ENCODE measurements at regions of chr13 and their contacts with region 1.

Region 1: DNA sequence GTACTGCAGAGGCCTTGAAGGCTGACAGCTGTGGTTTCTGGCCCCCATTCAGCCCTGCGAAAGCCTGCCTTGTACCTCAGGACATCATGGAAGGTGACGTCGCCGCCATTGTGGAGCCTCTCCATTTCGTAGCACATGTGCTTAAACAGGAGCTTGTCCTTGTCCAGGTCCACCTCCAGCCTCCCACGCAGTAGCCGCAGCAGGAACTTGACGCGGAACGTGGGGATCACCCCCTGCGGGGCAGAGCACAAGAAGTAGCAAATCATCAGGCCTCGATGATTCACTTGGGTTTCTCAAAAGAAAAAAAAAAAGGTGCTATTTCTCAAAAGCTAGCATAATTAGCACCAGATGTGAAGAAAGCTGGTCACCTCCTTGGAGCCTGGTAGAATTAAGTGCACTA is 351.0 kb downstream of the NALCN start:
- DNase-seq: no peak
- H3K4me3 Mint-ChIP-seq: no peak overlapping the region
- H3K27ac Mint-ChIP-seq: no peak overlapping the region
- H3K4me1 Mint-ChIP-seq: no peaks in the 10 kb centered on the region
- H3K27me3 Mint-ChIP-seq: no peaks in the 10 kb centered on the region

Region 2: DNA sequence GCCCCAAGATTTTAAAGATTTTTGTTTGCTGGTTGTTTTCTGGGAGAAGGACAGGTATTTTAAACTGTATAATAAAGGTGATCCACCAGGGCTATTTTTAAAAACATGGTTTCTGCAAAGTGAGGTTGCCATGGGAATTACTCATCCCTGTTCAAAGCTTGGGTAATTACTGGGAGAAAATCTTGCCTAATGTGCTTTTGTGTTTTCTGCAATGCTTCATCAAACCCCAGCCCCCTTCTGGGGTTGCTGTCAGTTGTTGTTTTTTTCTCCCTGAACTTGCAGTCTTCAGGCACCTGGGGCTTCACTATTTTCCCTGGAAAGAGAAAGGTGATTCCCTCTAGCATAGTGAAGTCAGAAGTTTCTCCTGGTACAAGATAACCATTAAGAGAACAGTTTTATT is 73.8 kb after region 1 on chr13:
- intact Hi-C with region 1: loop called (anchors 10 kb)
- DNase-seq: no peak
- H3K4me3 Mint-ChIP-seq: no peak overlapping the region
- H3K27ac Mint-ChIP-seq: no peak overlapping the region
- H3K4me1 Mint-ChIP-seq: no peaks in the 10 kb centered on the region
- H3K27me3 Mint-ChIP-seq: no peaks in the 10 kb centered on the region

Region 3: GRCh38 chr13:101706651-101707050 is 641.3 kb after region 1 on chr13:
- intact Hi-C with region 1: no loop called
- DNase-seq: no peak
- H3K4me3 Mint-ChIP-seq: no peak overlapping the region
- H3K27ac Mint-ChIP-seq: no peak overlapping the region
- H3K4me1 Mint-ChIP-seq: peaks cover 4% of the 10 kb centered on the region
- H3K27me3 Mint-ChIP-seq: no peaks in the 10 kb centered on the region

Measured in activated T-helper 2 cell treated with anti-CD3 and anti-CD28 coated beads, Interferon-gamma antibody, Interleukin-2, Interleukin-4, amounts not matched to agents 10 μg/mL and 5 μg/mL and 100 μg/mL, durations not matched to agents 14 hours and 24 hours and 36 hours (primary cell).